Heart right ventricle (tissue), 16 donors: ENCODE measurements at regions of chr17 and their contacts with region 1.

Region 1: GRCh38 chr17:40191237-40192208 is 14.3 kb downstream of the RAPGEFL1 start:
- DNase-seq: peak; percentile 65 to 76
- ATAC-seq: peak; percentile 77 to 91 (median 82)
- H3K4me3 ChIP-seq: peak overlapping the region; percentile 27 to 70 (median 62)
- H3K27ac ChIP-seq: peak overlapping the region in 7 of 10 donors; percentile 18 to 54 (median 40)
- H3K4me1 ChIP-seq: peaks cover 0 to 25% (median 7%) of the 10 kb centered on the region in 9 donors
- H3K27me3 ChIP-seq: peaks cover 0 to 7% (median 0%) of the 10 kb centered on the region in 7 donors
- CTCF ChIP-seq: peak; percentile 39 to 84 (median 70)

Region 2: DNA sequence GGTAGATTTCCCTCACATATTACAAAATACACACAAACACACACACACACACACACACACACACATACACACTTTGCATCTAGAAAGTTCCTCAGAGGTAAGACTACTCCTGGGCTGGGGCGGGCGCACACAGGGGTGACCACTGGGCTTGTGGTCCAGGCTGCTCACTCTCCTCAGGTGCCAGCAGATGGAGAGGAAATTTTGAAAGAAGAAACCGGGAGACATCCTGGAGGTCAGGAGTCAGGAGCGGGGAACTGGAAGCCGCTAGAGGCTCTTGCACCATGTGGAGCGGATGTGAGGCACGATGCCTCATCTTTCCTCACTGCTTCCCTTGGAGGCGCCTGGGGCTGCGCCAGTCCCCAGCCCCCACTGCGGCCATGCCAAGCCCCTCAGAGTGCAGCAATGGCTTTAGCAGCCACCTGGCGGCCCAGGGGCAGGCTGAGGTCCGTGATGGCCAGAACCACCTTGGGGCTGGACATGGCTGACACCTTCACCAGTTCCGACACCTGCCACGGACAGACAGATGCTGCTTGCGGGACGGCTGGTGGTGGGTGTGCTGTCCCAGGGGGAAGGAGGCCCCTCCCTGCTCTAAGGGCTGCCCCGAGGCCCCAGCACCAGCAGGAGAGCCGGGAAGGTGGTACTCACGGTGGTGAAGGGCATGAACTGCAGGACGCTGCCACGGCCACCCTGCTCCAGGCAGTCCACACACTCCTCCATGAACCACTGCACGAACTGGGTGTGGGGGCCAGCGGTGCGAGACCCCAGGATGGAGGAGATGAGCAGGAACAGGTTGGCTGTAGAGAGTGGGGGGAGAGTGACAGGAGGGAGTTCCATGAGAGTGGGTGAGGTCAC is 172.2 kb before region 1 on chr17:
- intact Hi-C with region 1: loop called in 4 of 10 experiments (anchors 5 to 10 kb)
- DNase-seq: peak in 1 of 2 donors; percentile 30
- ATAC-seq: peak in 2 of 8 donors; percentile 5 to 51
- H3K4me3 ChIP-seq: no peak overlapping the region
- H3K27ac ChIP-seq: peak overlapping the region in 5 of 10 donors; percentile 8 to 63 (median 60)
- H3K4me1 ChIP-seq: peaks cover 9 to 76% (median 53%) of the 10 kb centered on the region in 9 donors
- H3K27me3 ChIP-seq: no peaks in the 10 kb centered on the region
- CTCF ChIP-seq: no peak

Region 3: GRCh38 chr17:40158438-40159013 is 33.0 kb before region 1 on chr17:
- intact Hi-C with region 1: no loop called
- DNase-seq: no peak
- ATAC-seq: peak in 1 of 8 donors; percentile 50
- H3K4me3 ChIP-seq: no peak overlapping the region
- H3K27ac ChIP-seq: peak overlapping the region in 1 of 10 donors; percentile 46
- H3K4me1 ChIP-seq: peaks cover 0 to 37% (median 5%) of the 10 kb centered on the region in 9 donors
- H3K27me3 ChIP-seq: no peaks in the 10 kb centered on the region
- CTCF ChIP-seq: no peak